ENCODE measurements at regions of chr17 and their contacts with region 1.

Region 1: DNA sequence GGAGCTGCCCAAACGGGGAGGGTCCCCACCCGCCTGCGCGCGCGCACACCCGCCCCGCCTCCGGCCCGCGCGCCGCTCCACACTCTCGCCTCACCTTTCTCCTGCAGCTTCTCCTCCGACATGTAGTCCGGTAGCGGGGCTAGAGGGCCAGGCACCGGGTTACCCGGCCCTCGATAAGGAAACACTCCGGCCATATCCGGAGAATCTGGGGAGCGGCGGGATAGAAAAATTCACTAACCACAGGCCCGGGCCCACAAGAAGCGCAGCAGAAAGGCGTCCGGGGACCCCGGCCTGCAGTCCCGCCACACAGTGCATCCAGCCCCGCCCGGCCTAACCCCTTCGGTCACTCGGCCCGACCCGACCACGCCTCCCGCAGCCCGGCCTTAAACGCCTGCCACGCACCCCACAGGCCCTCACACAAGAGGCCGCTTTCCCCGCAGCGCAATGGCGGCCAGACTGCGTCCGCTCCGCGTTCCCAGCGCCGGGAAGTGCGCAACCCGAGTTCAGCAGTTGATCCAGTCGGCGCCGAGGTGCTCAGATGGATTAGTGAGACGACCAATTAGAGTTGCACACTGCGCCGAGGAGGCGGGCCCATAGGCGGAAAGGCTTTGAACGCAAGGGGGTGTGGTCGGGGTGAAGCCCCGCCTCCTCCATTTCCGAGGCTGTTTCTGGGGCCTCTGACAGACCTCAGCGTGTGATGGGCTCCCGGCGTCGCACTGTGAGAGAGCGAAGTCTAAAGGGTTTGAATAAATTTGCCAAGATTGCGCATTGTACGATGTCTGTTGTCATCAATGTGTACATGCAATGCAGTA is at the start of gene PRPF8:
- DNase-seq: peak; percentile 95 to 99 (median 98)
- ATAC-seq: peak; percentile 96 to 97
- H3K4me3 Mint-ChIP-seq: peak within 1 kb of the TSS; percentile 96 to 100 (median 99)
- H3K27ac Mint-ChIP-seq: peak within 1 kb of the TSS; percentile 97 to 100 (median 100)
- H3K4me1 Mint-ChIP-seq: peaks cover 32 to 54% (median 49%) of the 10 kb centered on the region in 4 donors
- H3K27me3 Mint-ChIP-seq: no peaks in the 10 kb centered on the region
- polyA plus RNA-seq, gene PRPF8: 133 to 227 (median 176) TPM

Region 2: GRCh38 chr17:1648963-1649843 is 35.4 kb before region 1 on chr17:
- POLR2A ChIA-PET with region 1: interaction called, 21 read pairs
- DNase-seq: peak; percentile 89 to 99 (median 94)
- ATAC-seq: peak; percentile 81 to 82
- H3K4me3 Mint-ChIP-seq: peak overlapping the region; percentile 54 to 80 (median 69)
- H3K27ac Mint-ChIP-seq: peak overlapping the region in 2 of 10 donors; percentile 43 to 75
- H3K4me1 Mint-ChIP-seq: peaks cover 2 to 30% (median 20%) of the 10 kb centered on the region in 4 donors
- H3K27me3 Mint-ChIP-seq: no peaks in the 10 kb centered on the region

Region 3: DNA sequence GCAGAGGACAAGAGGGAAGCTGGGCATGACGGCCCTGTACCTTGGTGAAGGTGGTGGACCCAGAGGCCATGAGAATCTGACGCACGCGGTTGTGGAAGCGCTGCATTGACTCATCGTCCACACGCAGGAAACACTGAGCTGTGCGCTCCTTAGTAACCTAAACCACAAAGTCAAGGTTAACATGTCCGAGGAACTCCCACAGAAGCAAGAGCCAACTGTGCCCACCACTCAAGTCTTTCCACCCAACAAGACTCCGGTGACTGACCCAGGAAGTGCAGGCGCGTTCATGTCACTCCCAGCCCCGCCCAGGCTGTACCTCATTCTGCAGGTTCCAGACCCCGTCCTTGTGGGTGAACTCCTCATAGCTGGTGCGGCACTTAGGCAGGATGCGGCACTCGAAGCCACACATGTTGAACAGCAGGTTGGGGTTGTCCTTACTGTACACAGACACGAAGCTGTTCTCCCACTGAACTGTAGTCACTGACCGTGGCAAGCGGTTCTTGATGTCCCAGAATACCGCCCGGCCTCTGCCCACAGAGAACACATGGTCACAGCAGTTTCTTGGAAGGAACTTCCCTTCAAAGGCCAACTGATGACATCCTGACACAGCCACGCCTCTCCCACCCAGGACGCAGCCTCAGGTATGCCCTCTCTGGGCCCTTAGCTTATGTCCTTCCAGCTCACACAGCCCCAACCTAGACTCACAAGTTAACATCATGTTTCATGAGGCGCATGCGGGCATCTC is 11.4 kb before region 1 on chr17:
- POLR2A ChIA-PET with region 1: interaction called, 22 read pairs
- DNase-seq: no peak
- ATAC-seq: no peak
- H3K4me3 Mint-ChIP-seq: no peak overlapping the region
- H3K27ac Mint-ChIP-seq: peak overlapping the region in 2 of 10 donors; percentile 12 to 30
- H3K4me1 Mint-ChIP-seq: peaks cover 14 to 44% (median 24%) of the 10 kb centered on the region in 4 donors
- H3K27me3 Mint-ChIP-seq: no peaks in the 10 kb centered on the region

Region 4: GRCh38 chr17:1697681-1698080 is 13.1 kb after region 1 on chr17:
- POLR2A ChIA-PET with region 1: no interaction called
- DNase-seq: no peak
- ATAC-seq: no peak
- H3K4me3 Mint-ChIP-seq: no peak overlapping the region
- H3K27ac Mint-ChIP-seq: peak overlapping the region in 1 of 10 donors; percentile 12
- H3K4me1 Mint-ChIP-seq: no peaks in the 10 kb centered on the region
- H3K27me3 Mint-ChIP-seq: peaks cover 0 to 5% (median 2%) of the 10 kb centered on the region in 5 donors

Region 5: DNA sequence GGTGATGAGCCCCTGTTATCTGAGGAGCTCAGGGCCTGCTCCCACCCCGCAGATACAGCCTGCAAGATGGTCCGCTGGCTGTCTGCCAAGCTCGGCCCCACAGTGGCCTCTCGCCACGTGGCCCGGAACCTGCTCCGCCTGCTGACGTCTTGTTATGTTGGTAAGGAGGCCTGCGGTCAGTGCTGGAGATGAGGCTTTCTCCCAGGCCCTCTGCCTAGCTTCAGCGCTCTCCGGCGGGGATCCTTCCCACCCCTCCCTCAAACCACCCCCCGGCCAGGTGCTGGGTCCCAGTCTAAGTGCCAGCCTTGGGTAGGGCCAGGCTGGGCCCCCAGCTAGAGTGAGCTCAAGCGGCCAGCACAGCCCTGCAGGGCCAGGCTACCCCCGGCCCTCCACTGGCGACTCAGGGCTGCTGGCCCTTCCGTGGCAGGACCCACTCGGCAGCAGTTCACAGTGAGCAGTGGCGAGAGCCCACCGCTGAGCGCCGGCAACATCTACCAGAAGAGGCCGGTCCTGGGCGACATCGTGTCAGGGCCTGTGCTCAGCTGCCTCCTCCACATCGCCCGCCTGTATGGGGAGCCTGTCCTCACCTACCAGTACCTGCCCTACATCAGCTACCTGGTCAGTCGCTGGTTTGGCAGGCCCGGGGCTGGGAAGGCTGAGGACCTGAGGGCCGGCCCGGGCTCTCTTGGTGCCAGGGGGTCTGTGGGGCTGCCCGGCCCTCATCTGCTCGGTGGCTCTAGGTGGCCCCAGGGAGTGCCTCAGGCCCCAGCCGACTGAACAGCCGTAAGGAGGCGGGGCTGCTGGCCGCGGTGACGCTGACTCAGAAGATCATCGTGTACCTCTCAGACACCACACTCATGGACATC is 46.0 kb after region 1 on chr17:
- POLR2A ChIA-PET with region 1: no interaction called
- DNase-seq: peak in 1 of 10 donors; percentile 63
- ATAC-seq: no peak
- H3K4me3 Mint-ChIP-seq: no peak overlapping the region
- H3K27ac Mint-ChIP-seq: no peak overlapping the region
- H3K4me1 Mint-ChIP-seq: peaks cover 15 to 37% (median 31%) of the 10 kb centered on the region in 4 donors
- H3K27me3 Mint-ChIP-seq: no peaks in the 10 kb centered on the region

Region 6: DNA sequence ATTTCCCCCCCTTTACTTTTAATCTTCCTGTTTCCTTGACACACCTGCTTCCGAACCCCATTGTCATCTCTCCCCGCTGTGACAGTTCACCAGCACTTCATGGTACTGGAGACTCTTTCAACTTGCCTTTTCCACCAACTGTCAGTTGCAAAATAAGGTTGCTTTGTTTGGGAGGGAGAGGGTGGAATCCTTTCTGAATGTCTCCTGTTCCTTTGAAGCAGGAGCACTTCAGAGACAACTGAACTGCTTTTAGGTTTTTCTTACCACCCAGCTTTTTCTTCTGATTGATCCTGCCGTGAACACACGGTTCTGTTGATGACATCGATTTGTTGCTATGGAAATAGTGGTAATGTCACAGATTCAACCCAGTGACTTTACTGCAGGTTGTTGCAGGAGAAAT is 187.2 kb after region 1 on chr17:
- POLR2A ChIA-PET with region 1: no interaction called
- DNase-seq: peak in 8 of 10 donors; percentile 52 to 86 (median 66)
- ATAC-seq: peak; percentile 75 to 79
- H3K4me3 Mint-ChIP-seq: peak overlapping the region; percentile 60 to 91 (median 74)
- H3K27ac Mint-ChIP-seq: peak overlapping the region; percentile 84 to 98 (median 94)
- H3K4me1 Mint-ChIP-seq: peaks cover 21 to 58% (median 45%) of the 10 kb centered on the region in 4 donors
- H3K27me3 Mint-ChIP-seq: no peaks in the 10 kb centered on the region